H1 (cell line): ENCODE measurements at regions of chr20 and their contacts with region 1.

Region 1: GRCh38 chr20:25399037-25399430 is 8.4 kb upstream of the ABHD12 start:
- DNase-seq: no peak
- H3K4me3 ChIP-seq: no peak overlapping the region
- H3K27ac ChIP-seq: no peak overlapping the region
- H3K4me1 ChIP-seq: no peaks in the 10 kb centered on the region; a peak in 1 of 7 replicates
- H3K27me3 ChIP-seq: no peaks in the 10 kb centered on the region
- CTCF ChIP-seq: peak in 2 of 3 experiments; percentile 51 to 62; a peak in 3 of 4 replicates
- EP300 ChIP-seq: no peak
- POLR2A ChIP-seq: no peak
- RAD21 ChIP-seq: peak; percentile 81 to 82

Region 2: DNA sequence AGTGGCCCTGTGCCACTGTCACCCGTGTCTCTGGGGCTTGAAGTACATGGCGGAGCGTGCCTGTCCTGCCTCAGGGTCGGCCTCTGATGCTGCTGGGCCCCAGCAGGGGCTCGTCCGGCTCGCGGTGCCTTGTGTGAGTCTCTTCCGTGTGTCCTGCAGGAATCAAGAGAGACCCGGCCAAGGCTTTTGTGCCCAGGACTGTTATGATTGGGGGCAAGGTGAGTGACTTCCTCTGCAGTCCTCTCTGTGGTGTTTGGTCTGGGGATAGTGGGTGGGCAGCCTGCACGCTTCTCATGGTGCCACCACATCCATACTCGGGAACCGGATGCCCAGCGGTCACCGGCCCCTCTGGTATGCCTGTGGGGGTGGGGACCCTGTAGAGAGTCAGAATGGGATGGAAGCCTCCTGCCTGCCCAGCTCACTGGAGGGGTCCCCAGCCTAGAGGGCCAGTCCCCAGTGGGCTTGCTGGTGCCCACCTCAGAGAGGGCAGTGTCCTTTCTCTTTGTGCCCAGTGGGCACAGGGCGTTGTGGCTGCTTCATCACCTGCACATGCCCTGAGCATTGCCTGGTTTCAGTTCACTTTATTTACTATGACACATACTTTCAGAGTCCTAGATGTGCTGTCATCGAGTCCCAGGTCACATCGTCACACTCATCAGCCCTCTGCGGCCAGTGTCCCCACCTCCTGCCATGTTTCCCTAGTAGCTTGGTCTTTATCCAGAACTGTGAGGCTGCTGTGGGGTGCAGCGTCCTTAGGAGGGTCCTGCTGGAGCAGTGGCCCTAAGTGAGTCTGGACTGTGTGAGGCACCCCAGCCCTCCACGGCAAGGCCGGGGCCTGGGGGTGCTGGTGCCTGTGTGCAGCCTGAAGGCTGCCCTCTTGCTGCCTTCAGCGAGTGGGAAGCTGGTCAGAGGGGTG is 110.5 kb before region 1 on chr20:
- CTCF ChIA-PET with region 1: interaction called, 79 read pairs
- POLR2A ChIA-PET with region 1: no interaction called
- DNase-seq: no peak
- H3K4me3 ChIP-seq: no peak overlapping the region
- H3K27ac ChIP-seq: no peak overlapping the region
- H3K4me1 ChIP-seq: no peaks in the 10 kb centered on the region
- H3K27me3 ChIP-seq: no peaks in the 10 kb centered on the region
- CTCF ChIP-seq: no peak
- EP300 ChIP-seq: no peak
- POLR2A ChIP-seq: no peak
- RAD21 ChIP-seq: no peak

Region 3: DNA sequence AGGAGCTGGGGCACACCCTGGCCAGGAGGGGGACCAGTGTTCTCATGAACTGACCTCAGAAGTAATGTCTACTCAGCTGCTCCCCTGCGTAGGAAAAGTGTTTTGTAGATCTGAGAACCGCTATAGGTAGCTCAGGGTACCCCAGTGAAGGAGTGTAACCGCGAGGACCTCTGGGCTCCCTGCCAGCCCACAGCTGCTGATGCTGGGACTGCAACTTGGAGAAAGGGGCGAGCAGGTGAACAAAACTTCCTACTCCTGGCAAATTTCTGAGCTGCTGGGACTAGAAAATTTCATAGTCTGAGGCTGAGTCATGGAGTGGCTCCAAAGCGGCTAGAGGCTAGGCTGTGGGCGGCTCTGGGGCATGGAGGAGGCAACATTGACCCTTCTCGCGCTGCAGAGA is 99.2 kb before region 1 on chr20:
- CTCF ChIA-PET with region 1: interaction called, 79 read pairs
- POLR2A ChIA-PET with region 1: interaction called, 8 read pairs
- DNase-seq: no peak
- H3K4me3 ChIP-seq: no peak overlapping the region
- H3K27ac ChIP-seq: no peak overlapping the region
- H3K4me1 ChIP-seq: peaks cover 0 to 7% (median 2%) of the 10 kb centered on the region in 4 experiments; a peak in 3 of 7 replicates
- H3K27me3 ChIP-seq: no peaks in the 10 kb centered on the region; a peak in 1 of 7 replicates
- CTCF ChIP-seq: no peak
- EP300 ChIP-seq: no peak
- POLR2A ChIP-seq: no peak
- RAD21 ChIP-seq: no peak; a peak in 1 of 4 replicates

Region 4: GRCh38 chr20:25310268-25310920 is 88.6 kb before region 1 on chr20:
- CTCF ChIA-PET with region 1: interaction called, 42 read pairs
- POLR2A ChIA-PET with region 1: no interaction called
- DNase-seq: no peak
- H3K4me3 ChIP-seq: no peak overlapping the region
- H3K27ac ChIP-seq: no peak overlapping the region
- H3K4me1 ChIP-seq: peaks cover 0 to 3% (median 0%) of the 10 kb centered on the region in 4 experiments; a peak in 2 of 7 replicates
- H3K27me3 ChIP-seq: no peaks in the 10 kb centered on the region
- CTCF ChIP-seq: peak in 2 of 3 experiments; percentile 28 to 35; a peak in 2 of 4 replicates
- EP300 ChIP-seq: no peak
- POLR2A ChIP-seq: no peak
- RAD21 ChIP-seq: peak; percentile 54 to 55

Region 5: DNA sequence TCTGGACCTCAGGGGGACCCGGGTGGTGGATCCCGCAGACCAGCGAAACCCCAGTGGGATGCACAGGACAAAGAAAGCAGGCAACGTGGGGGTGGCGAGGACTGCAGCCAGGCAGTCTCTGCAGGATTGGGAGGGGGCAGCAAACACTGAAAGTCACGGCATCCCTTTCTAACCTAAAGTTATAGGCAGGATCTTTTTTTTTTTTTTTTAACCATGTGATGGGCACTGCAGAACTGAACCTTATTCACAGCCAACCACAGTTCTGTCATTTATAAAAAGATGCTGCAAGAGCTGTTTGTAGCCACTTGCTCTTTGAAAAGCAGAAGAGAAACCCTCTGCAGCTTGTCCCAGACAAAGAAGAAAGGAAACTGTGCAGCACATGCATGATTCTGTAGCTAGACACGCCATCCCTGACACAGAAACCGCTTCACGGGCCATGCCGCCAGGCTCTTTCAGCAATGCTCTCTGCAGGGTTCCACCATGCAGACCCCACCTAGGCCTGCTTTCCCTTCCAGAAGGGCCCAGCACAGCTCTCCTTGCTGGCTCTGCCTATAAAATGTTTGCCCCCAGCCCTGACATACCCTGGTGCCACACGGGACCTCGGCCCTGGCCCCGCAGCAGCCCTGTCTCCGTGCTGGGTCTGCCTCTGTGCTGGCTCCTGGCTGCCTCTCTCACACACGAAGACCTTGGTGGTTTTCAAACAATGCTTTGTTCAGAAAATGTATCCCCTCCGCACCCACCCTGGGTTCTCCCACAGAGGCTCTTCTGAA is 80.4 kb before region 1 on chr20:
- CTCF ChIA-PET with region 1: interaction called, 42 read pairs
- POLR2A ChIA-PET with region 1: interaction called, 3 read pairs
- DNase-seq: no peak
- H3K4me3 ChIP-seq: no peak overlapping the region
- H3K27ac ChIP-seq: no peak overlapping the region
- H3K4me1 ChIP-seq: peaks cover 0 to 1% (median 0%) of the 10 kb centered on the region in 4 experiments; a peak in 1 of 7 replicates
- H3K27me3 ChIP-seq: no peaks in the 10 kb centered on the region
- CTCF ChIP-seq: no peak
- EP300 ChIP-seq: no peak
- POLR2A ChIP-seq: no peak
- RAD21 ChIP-seq: no peak

Region 6: GRCh38 chr20:25336561-25337422 is 62.2 kb before region 1 on chr20:
- CTCF ChIA-PET with region 1: interaction called, 36 read pairs
- POLR2A ChIA-PET with region 1: interaction called, 4 read pairs
- DNase-seq: peak; percentile 38 to 57
- H3K4me3 ChIP-seq: no peak overlapping the region
- H3K27ac ChIP-seq: no peak overlapping the region
- H3K4me1 ChIP-seq: peaks cover 0 to 9% (median 4%) of the 10 kb centered on the region in 4 experiments; a peak in 4 of 7 replicates
- H3K27me3 ChIP-seq: no peaks in the 10 kb centered on the region
- CTCF ChIP-seq: peak; percentile 58 to 76 (median 71)
- EP300 ChIP-seq: no peak
- POLR2A ChIP-seq: no peak
- RAD21 ChIP-seq: peak; percentile 83 to 91

Region 7: DNA sequence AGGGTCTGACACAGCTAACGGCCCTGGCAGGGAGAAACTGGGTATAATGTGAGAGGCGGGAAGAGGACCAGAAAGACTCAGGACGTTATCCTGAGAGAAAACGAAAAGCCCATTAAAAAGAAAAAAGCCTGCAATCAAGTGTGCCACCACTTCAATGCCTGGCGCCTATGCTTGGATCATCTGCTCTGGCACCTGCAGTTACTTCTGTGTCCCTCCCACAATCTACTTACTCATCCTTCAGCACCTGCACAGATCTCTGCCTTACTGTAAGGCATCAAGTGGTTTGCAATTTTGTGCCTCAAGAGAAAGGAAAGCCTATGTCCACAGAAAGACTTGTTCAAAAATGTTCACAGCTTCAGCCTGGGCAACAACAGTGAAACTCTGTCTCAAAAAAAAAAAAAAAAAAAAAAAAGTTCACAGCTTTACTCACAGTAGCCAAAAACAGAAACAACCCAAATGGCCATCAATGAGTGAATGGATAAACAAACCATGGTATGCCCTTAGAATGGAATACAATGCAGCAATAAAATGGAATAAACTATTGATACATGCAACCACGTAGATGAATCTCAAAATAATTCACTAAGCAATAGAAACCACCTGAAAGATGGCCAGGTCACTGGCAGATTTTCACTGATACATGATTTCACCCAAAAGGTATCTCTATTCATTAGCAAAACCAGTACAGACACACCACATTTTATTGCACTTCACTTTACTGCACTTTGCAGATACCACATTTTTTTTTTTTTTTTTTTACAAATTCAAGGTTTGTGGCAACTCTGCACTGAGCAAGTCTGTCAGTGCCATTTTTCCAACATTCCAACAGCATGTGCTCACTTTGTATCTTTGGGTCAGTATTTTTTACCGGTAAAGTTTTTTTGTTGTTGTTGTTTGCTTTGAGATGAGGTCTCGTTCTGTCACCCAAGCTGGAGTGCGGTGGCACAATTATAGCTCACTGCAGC is 57.0 kb before region 1 on chr20:
- CTCF ChIA-PET with region 1: interaction called, 36 read pairs
- POLR2A ChIA-PET with region 1: interaction called, 4 read pairs
- DNase-seq: no peak
- H3K4me3 ChIP-seq: no peak overlapping the region
- H3K27ac ChIP-seq: no peak overlapping the region
- H3K4me1 ChIP-seq: peaks cover 0 to 9% (median 4%) of the 10 kb centered on the region in 4 experiments; a peak in 4 of 7 replicates
- H3K27me3 ChIP-seq: no peaks in the 10 kb centered on the region
- CTCF ChIP-seq: no peak
- EP300 ChIP-seq: no peak
- POLR2A ChIP-seq: no peak
- RAD21 ChIP-seq: no peak